ENCODE measurements at regions of chr17 and their contacts with region 1.

Region 1: DNA sequence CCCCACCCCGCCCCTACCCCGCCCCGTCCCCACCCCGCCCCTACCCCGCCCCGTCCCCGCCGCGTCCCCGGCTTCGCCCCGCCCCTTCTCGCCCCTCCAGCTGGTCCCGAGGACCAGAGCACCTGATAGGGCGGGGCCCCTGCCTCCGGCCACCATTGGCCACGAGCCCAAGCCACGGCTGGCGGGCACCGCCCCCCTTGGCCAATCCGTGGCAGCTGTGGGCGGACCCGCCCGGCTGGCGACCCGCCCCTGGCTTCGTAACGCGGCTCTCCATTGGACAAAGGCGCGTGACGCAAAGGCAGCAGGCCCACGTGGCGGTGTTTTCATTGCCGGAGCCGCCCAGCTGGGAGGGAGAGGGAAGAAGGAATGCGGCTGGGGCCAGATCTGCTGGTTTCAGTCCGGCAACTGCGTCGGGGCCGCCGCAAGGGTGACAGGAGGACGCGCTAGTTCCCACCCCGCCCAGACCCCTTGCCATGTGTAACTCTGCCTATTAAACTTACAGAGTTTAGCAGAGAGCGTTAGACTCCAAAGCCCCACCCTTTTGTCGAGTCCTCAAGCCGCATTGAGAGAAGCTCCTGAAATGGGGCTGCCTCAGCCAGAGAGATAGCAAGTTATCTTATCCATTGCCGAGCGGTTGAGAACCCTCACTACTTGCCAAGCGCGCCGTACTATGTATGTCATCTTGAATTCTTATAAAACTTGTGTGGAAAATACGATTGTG is 403 bp upstream of the WIPI1 start:
- DNase-seq: peak; percentile 99
- H3K4me3 Mint-ChIP-seq: peak overlapping the region; percentile 74
- H3K27ac Mint-ChIP-seq: peak overlapping the region; percentile 98
- H3K4me1 Mint-ChIP-seq: peaks cover 85% of the 10 kb centered on the region
- H3K27me3 Mint-ChIP-seq: no peaks in the 10 kb centered on the region

Region 2: GRCh38 chr17:68035523-68036303 is 422.0 kb before region 1 on chr17 and contains the start of gene KPNA2:
- CTCF ChIA-PET with region 1: interaction called, 6 read pairs
- POLR2A ChIA-PET with region 1: interaction called, 16 read pairs
- DNase-seq: peak; percentile 94
- H3K4me3 Mint-ChIP-seq: peak within 1 kb of the TSS; percentile 99
- H3K27ac Mint-ChIP-seq: peak within 1 kb of the TSS; percentile 96
- H3K4me1 Mint-ChIP-seq: peaks cover 31% of the 10 kb centered on the region
- H3K27me3 Mint-ChIP-seq: no peaks in the 10 kb centered on the region
- total RNA-seq, gene KPNA2: 227 TPM

Region 3: DNA sequence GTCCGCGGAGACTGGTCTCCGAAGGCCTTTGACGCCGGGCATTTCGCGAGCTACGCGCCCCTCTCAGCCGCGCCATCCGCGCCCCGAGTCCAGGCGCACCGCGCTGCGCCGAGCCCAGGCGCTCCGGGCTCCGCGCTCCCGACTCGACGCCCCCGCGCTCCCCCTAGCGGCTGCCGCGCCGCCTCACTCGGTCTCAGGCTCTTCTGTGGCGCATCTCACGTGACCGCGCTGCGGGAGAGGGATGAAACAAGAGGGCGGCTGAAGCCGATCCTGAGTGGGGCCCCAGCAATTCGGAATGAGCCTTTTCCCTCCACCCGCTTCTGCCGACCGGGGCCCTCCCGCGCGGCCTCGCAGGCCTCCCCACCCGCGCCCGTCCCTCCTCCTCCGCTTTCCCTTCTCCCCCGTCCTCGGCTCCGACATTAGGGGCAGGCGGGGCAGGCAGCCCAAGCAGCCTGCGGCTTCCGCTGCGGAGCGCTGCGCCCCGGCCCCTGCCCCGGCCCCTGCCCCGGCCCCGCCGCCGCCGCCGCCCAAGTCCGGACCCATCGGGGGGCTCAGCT is 252.4 kb before region 1 on chr17:
- CTCF ChIA-PET with region 1: interaction called, 16 read pairs
- POLR2A ChIA-PET with region 1: interaction called, 18 read pairs
- DNase-seq: peak; percentile 93
- H3K4me3 Mint-ChIP-seq: peak overlapping the region; percentile 83
- H3K27ac Mint-ChIP-seq: peak overlapping the region; percentile 87
- H3K4me1 Mint-ChIP-seq: peaks cover 33% of the 10 kb centered on the region
- H3K27me3 Mint-ChIP-seq: peaks cover 2% of the 10 kb centered on the region

Region 4: DNA sequence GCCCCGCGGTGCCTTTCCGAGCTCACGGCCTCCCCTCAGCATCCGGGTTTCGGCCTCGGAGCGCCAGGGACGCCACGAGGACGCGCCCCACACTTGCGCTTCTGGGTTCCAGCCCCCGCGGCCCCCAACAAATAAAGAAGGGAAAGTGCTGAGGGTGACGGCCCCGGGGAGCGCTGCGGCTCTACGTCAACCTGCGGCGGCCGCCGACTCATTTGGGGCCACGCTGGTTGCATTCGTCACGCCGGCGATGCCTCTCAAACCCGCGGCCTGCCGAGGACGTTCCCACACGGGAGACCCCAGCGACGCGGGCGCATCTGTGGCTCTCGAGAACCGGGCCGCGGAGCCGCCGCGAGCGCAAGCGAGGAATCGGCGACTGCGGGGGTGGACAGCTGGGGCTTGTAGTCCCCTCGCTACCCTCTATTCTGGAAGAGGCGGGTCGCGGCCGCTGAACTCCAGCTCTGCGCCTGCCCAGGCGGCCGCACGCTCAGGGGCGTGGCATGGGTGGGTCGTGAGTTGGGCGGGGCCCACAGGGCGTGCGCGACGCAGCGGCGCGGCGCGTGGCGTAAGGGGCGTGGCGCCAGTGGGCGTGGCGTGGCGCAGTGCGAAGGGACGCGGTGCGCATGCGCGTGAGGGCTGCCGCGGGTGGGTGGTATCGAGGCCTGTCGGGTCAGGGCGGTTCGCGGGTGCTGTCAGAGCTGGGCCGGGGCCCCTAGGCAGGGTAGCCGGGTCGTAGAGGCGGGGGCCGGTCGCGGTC is 210.1 kb before region 1 on chr17 and contains the start of gene AMZ2:
- CTCF ChIA-PET with region 1: interaction called, 7 read pairs
- POLR2A ChIA-PET with region 1: interaction called, 70 read pairs
- DNase-seq: peak; percentile 97
- H3K4me3 Mint-ChIP-seq: peak within 1 kb of the TSS; percentile 85
- H3K27ac Mint-ChIP-seq: peak within 1 kb of the TSS; percentile 90
- H3K4me1 Mint-ChIP-seq: peaks cover 42% of the 10 kb centered on the region
- H3K27me3 Mint-ChIP-seq: no peaks in the 10 kb centered on the region
- total RNA-seq, gene AMZ2: 106 to 121 TPM

Region 5: DNA sequence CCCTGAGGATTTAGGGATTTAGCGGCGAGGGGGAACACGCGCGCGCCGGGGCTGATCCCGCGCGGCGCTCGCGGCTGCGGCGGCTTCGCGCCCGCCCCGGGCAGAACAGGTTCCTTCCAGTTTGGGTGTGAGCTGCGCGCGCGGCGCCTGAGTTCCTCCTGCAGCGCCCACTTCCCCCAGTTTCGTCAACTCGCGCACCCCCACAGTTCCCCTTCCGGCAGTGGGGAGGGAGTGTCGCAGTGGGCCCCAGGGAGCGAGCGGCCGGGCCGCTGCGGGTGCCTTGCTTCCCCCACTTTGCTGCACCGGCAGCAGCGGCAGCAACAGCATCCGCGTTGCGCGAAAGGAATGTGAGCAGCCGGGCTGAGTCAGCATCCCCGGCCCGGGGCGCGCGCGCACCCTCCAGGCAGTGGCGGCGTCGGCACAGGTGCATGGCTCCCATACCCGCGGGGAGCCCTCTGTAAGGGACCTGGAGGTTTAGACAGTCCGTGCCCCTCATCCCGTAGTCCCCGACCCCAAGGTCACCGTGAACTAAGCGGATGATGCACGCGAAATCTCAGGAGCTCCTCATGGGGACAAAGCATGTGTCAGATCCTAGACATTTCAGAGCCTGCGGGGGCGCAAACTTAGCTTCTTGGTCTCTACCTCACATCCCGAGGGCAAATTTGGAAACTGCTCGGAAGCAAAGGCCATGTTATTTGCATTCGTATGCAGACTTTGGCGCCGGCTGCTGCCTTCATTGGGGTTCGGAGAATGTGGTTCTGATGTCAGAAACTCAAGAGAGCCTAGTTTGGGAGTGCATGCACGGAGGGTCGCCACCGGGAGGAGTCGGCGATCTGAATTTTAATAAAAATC is 165.6 kb before region 1 on chr17:
- CTCF ChIA-PET with region 1: interaction called, 6 read pairs
- POLR2A ChIA-PET with region 1: interaction called, 89 read pairs
- DNase-seq: peak; percentile 97
- H3K4me3 Mint-ChIP-seq: peak overlapping the region; percentile 81
- H3K27ac Mint-ChIP-seq: peak overlapping the region; percentile 95
- H3K4me1 Mint-ChIP-seq: peaks cover 71% of the 10 kb centered on the region
- H3K27me3 Mint-ChIP-seq: no peaks in the 10 kb centered on the region

Region 6: DNA sequence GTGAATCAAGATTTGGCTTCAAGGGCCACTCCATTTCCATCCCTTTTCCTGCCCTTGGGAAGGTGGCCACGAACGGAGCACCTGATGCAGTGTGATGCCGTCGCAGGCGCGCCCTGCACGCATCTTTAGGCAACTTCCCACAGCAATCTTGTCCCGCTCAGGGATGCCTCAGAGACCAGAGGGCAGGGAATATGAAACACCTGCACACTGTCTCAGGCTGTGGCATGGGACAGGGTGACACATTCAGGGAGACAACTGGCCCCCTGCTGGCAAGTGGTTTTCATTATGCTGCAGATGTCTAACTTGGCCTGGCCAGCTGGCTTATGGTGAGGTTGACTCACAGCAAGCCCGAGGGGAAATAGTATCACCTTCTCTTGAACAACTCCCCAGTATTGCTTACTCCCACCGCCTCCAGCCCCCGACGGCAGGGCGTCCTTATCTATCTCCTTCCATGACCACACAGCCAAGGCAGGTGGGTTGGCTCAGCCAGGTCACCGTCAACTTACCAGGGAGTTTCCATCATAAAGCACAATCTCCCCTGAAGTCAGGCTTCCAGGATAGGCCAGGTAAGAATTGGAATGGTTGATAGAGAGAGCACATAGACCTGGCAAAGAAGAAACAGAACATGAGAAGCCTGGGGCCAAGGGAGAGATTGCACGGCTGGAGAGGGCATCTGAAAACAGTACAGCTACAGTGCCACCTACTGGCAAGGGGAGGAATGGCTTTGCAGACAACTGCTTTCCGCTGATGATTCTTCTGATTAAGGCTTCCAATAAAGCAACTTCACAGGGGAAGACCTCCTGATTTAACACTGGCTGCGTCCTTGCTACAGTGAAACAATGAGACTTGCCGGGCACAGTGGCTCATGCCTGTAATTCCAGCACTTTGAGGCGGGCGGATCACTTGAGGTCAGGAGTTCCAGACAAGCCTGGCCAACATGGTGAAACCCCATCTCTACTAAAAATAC is 21.5 kb before region 1 on chr17:
- CTCF ChIA-PET with region 1: interaction called, 206 read pairs
- POLR2A ChIA-PET with region 1: interaction called, 255 read pairs
- DNase-seq: peak; percentile 89
- H3K4me3 Mint-ChIP-seq: peak overlapping the region; percentile 60
- H3K27ac Mint-ChIP-seq: peak overlapping the region; percentile 90
- H3K4me1 Mint-ChIP-seq: peaks cover 67% of the 10 kb centered on the region
- H3K27me3 Mint-ChIP-seq: no peaks in the 10 kb centered on the region

Region 7: GRCh38 chr17:68479137-68479536 is 21.4 kb after region 1 on chr17:
- CTCF ChIA-PET with region 1: no interaction called
- POLR2A ChIA-PET with region 1: no interaction called
- DNase-seq: no peak
- H3K4me3 Mint-ChIP-seq: no peak overlapping the region
- H3K27ac Mint-ChIP-seq: no peak overlapping the region
- H3K4me1 Mint-ChIP-seq: peaks cover 5% of the 10 kb centered on the region
- H3K27me3 Mint-ChIP-seq: peaks cover 37% of the 10 kb centered on the region

Region 8: DNA sequence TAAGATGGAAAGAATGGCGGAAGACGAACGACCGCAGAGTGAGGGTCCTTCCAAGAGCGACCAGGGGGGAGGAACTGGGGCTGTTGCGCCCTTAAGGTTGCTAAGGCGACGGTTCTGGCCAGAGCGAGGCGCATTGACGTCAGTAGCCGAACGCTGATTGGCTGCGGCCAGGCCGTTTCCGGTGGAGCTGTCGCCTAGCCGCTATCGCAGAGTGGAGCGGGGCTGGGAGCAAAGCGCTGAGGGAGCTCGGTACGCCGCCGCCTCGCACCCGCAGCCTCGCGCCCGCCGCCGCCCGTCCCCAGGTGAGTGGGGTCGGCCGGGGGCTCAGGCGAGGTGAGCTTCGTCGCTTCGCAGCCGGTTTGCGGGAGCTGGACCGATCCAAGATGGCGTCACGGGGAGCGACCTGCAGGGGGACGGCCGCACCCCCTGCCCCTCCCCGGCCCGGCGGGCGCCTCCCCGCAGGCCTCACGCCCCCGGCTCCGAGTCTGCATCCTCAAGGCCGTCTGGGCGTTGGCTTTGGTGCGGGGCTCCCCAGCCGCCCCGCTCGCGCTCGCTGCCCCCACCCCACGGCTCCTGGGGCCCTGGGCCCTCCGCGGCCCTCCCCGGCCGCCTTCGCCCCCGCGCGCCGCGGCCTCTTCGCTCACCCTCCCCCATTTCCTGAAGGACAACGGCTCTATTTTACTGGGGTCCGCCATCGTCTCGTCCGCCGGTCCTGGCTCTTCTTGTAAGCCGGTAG is 54.7 kb after region 1 on chr17 and contains the start of gene PRKAR1A:
- CTCF ChIA-PET with region 1: interaction called, 5 read pairs
- POLR2A ChIA-PET with region 1: interaction called, 21 read pairs
- DNase-seq: peak; percentile 94
- H3K4me3 Mint-ChIP-seq: peak within 1 kb of the TSS; percentile 98
- H3K27ac Mint-ChIP-seq: peak within 1 kb of the TSS; percentile 98
- H3K4me1 Mint-ChIP-seq: peaks cover 63% of the 10 kb centered on the region
- H3K27me3 Mint-ChIP-seq: no peaks in the 10 kb centered on the region
- total RNA-seq, gene PRKAR1A: 281 to 287 TPM

Region 9: DNA sequence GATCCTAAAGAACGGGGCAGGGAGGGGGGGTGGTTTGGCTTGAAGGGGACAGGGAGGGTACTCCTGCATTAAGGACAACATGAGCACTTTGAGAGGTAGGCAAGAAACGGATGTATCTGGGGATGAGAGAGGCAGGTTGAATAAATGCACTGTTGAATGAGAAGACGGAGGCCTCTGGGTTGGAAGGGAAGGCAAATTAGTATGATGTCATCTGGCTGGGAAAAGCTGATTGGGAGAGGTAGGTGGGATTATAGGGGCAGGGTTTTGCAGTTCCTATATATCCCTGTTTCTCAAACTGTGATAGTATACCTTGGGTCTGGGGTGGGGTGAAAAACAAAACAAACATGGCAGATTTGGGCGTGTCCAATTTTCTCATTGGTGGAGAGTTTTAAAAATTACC is 98.9 kb after region 1 on chr17:
- CTCF ChIA-PET with region 1: no interaction called
- POLR2A ChIA-PET with region 1: no interaction called
- DNase-seq: no peak
- H3K4me3 Mint-ChIP-seq: no peak overlapping the region
- H3K27ac Mint-ChIP-seq: no peak overlapping the region
- H3K4me1 Mint-ChIP-seq: no peaks in the 10 kb centered on the region
- H3K27me3 Mint-ChIP-seq: peaks cover 3% of the 10 kb centered on the region

Region 10: DNA sequence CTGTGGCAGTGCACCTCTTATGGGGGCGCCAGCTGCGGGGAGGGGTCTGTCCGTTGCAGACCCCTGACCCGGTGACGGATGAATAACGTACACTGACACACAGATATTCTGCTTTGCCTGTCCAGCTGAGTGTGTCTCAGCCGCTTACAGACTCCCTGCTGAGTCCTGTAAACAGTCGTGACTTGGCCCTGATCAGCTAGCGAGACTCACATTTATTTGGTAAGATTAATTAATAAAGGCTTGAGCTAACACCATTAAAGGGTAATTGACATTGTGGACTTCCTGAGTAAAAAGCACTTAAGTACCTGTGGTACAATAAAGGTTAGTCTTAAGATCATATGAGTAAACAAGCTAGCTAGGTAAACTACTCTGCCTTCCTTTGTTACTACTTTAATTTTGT is 189.4 kb after region 1 on chr17:
- CTCF ChIA-PET with region 1: no interaction called
- POLR2A ChIA-PET with region 1: no interaction called
- DNase-seq: no peak
- H3K4me3 Mint-ChIP-seq: no peak overlapping the region
- H3K27ac Mint-ChIP-seq: no peak overlapping the region
- H3K4me1 Mint-ChIP-seq: no peaks in the 10 kb centered on the region
- H3K27me3 Mint-ChIP-seq: peaks cover 9% of the 10 kb centered on the region